Sigmoid colon (tissue), 7 donors: ENCODE measurements at regions of chr21 and their contacts with region 1.

Region 1: DNA sequence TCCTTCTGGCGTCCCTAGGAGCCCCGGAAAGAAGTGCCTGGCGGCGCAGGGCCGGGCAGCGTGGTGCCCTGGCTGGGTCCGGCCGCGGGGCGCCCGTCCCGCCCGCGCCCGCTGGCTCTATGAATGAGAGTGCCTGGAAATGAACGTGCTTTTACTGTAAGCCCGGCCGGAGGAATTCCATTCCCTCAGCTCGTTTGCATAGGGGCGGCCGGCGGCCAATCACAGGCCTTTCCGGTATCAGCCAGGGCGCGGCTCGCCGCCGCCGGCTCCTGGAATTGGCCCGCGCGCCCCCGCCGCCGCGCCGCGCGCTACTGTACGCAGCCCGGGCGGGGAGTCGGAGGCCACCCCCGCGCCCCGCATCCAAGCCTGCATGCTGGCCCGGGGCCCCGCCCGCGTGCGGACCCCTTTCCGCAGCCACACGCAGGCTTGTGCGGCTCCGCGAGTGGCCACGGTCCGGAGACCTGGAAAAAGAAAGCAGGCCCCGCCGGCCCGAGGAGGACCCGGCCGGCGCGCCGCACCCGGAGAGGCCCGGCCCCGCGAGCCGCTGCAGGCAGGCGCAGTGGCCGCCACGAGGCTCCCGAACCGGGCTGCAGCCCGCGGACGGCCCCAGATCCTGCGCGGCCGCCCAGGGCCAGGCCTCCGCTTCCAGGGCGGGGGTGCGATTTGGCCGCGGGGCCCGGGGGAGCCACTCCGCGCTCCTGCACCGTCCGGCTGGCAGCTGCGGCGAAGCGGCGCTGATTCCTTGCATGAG is 160.4 kb downstream of the RUNX1 start:
- DNase-seq: peak; percentile 97
- H3K4me3 ChIP-seq: peak overlapping the region; percentile 50 to 81 (median 67)
- H3K27ac ChIP-seq: peak overlapping the region; percentile 78 to 93 (median 87)
- H3K4me1 ChIP-seq: peaks cover 0 to 48% (median 46%) of the 10 kb centered on the region in 4 donors
- H3K27me3 ChIP-seq: peaks cover 20 to 74% (median 54%) of the 10 kb centered on the region in 3 donors
- CTCF ChIP-seq: no peak
- EP300 ChIP-seq: peak in 2 of 4 donors; percentile 23 to 30
- POLR2A ChIP-seq: peak; percentile 29 to 53

Region 2: DNA sequence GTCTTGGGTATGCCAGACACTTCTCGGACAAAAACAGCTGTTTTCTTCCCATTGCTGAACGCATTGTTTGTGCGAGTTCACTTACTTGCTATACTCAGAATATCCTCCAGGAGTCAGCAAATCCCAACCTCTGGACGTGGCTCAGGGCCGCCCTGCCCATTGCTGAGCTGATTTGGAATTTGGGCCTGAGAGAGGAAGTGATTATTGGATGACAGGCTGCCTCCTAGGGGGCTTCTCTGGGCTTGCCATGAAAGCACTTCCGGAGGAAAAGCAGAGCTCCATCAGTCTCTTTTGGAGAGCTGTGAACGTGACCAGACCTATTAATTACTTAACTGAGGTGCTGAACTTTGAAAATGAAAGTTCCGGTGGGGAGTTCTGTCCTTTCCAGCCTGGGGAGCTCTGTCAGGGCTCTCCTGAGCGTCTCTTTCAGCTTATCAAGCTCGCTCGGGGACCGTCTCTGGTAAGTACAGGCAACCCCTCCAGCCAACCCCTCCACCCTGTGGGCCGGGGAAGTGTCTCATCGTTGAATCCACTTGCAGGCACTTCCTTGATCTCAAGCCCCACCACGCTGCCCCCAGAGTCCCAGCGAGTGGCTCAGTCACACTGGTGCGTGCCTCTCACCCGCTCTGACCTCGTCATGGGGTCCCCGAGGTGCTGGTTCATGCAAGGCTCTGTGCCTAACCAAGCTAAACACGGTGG is 143.0 kb before region 1 on chr21:
- intact Hi-C with region 1: loop called (anchors 2 kb)
- DNase-seq: peak; percentile 84
- H3K4me3 ChIP-seq: no peak overlapping the region
- H3K27ac ChIP-seq: no peak overlapping the region
- H3K4me1 ChIP-seq: peaks cover 0 to 10% (median 5%) of the 10 kb centered on the region in 4 donors
- H3K27me3 ChIP-seq: peaks cover 0 to 11% (median 0%) of the 10 kb centered on the region in 3 donors
- CTCF ChIP-seq: peak; percentile 79 to 85 (median 82)
- EP300 ChIP-seq: no peak
- POLR2A ChIP-seq: no peak

Region 3: DNA sequence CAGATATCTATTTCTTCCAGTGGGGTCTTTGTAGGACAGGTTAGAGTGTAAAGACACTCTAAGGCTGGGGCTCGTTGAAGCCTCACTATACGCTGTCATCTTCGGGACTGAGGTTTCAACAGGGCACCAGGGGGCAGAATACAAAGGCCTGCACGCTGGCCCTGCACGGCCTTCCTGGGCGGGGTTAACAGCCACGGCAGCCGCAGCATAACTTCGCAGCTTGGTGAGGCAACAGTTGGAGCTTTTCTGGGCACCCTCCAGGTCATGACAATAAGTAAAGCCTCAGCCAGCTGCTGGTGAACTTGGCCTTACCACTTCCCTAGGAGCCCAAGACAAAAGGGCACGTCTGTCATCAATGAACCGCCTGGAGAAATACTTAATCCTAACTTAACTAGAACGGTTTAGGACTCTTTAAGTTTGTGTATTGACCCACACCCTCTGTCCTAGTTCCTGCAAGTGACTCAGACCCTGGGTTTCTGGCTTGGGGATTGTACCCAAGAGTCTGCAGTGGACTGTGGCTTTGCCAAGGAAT is 162.6 kb after region 1 on chr21:
- intact Hi-C with region 1: loop called (anchors 5 kb)
- DNase-seq: peak; percentile 90
- H3K4me3 ChIP-seq: no peak overlapping the region
- H3K27ac ChIP-seq: peak overlapping the region in 3 of 4 donors; percentile 69 to 80 (median 79)
- H3K4me1 ChIP-seq: peaks cover 0 to 77% (median 69%) of the 10 kb centered on the region in 4 donors
- H3K27me3 ChIP-seq: no peaks in the 10 kb centered on the region
- CTCF ChIP-seq: peak in 2 of 4 experiments; percentile 26 to 34
- EP300 ChIP-seq: no peak
- POLR2A ChIP-seq: no peak

Region 4: DNA sequence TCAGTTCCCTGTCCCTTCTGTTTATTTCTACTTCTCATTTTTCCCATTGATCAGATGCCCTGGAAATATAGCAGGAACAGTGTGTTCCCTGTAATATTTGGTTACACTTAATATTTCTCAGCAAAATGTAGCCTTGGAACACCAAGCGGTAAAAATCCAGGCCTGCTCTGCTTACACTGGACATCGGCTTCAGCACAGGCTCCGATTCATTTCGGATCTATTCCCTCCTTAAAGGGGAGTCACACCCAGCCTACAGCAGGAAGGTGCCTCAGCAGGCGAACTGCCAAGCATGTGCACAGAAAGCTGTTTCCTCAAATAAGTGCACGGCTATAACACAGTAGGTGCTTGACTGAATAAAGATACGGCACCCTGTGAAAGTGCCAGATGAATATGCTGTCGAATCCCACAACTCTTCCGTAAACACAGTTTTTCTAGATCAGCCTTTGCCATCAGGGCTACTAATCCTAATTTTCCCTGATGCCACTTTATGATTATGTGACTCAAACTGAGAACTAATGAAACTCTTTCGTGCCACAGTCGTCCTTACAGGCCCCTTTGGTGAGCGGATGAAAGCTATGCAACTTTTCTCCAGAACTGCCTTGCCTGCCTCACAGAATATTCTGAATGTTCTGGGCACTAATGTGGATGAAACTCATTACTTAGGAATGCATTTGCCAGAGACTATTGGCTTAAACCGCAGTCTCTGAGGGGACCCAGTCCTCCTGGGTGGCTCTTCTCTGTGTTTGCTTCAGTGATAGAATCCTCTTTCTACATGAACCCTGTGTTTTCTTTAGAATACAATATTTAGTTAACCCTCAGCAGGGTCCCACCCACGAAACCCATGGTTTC is 435.9 kb after region 1 on chr21:
- intact Hi-C with region 1: loop called (anchors 2 kb)
- DNase-seq: peak; percentile 81
- H3K4me3 ChIP-seq: peak overlapping the region in 1 of 4 donors; percentile 0
- H3K27ac ChIP-seq: peak overlapping the region; percentile 56 to 91 (median 88)
- H3K4me1 ChIP-seq: peaks cover 0 to 49% (median 43%) of the 10 kb centered on the region in 4 donors
- H3K27me3 ChIP-seq: no peaks in the 10 kb centered on the region
- CTCF ChIP-seq: no peak
- EP300 ChIP-seq: peak in 2 of 4 donors; percentile 65 to 67
- POLR2A ChIP-seq: no peak

Region 5: GRCh38 chr21:35616090-35616489 is 727.3 kb after region 1 on chr21:
- intact Hi-C with region 1: loop called (anchors 5 kb)
- DNase-seq: no peak
- H3K4me3 ChIP-seq: no peak overlapping the region
- H3K27ac ChIP-seq: no peak overlapping the region
- H3K4me1 ChIP-seq: no peaks in the 10 kb centered on the region
- H3K27me3 ChIP-seq: no peaks in the 10 kb centered on the region
- CTCF ChIP-seq: peak in 2 of 4 experiments; percentile 24 to 36
- EP300 ChIP-seq: no peak
- POLR2A ChIP-seq: no peak

Region 6: DNA sequence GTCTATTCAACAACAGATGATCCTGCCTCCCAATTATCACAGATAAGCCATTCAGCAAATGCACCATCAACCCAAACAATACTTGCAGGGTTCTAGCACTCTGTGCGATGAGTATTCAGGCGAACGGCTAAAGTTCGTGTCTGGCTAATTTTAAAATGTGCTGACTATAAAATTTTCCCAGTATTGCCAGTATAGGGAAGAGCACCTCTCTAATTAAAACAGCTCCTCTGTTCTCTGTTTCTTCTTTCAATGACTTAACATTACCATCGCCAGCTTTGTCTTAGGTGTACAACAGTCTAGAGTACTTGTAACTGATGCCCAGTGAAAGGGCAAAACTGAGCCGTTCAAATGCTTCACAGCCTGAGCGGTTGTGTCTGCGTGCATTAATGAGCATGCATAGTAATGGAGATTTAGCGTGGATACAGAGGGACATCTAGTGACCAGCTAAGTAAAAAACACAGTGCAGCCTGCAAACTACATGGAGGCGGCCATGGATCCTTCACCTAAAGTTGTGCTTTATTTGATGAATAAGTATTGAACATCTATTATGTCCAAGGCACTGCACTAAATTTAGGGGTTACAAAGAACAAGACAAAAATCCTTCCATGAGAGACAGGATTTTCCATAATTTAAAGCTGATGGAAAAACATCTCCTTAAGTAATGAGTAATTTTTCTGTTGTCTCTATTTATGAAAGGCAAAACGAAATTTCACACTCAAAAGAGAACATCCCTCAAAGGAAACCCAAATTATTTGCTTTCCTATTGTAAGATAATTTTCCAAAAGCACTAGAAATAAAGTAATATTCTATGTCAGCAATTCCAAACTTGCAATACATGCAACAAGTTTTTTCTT is 1051.6 kb after region 1 on chr21:
- intact Hi-C with region 1: loop called (anchors 5 kb)
- DNase-seq: peak; percentile 67
- H3K4me3 ChIP-seq: no peak overlapping the region
- H3K27ac ChIP-seq: no peak overlapping the region
- H3K4me1 ChIP-seq: no peaks in the 10 kb centered on the region
- H3K27me3 ChIP-seq: no peaks in the 10 kb centered on the region
- CTCF ChIP-seq: peak; percentile 44 to 64 (median 54)
- EP300 ChIP-seq: no peak
- POLR2A ChIP-seq: no peak